GM13976 (cell line): ENCODE measurements at regions of chr12 and their contacts with region 1.

Region 1: GRCh38 chr12:43501703-43502102 is 50.3 kb downstream of the ADAMTS20 start:
- DNase-seq: peak; percentile 38
- CTCF ChIP-seq: peak; percentile 22

Region 2: DNA sequence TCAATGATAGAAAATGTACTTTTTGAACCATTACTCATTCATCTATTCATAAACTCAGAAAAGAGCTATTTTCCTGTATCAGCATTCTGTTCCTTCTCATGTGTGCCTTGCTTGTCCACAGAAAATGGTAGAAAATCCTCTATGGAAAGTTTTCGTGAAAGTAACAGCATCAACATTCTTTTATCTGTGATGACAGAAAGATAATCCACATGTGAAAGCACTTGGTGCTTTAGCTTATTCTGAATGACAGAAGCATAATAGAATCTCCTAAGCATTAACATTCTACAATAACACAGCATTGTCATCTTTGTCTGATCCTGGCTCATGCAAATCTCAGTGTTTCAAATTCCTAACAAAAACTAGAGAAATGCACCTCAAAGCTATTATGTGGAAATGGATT is 381.6 kb before region 1 on chr12:
- in situ Hi-C with region 1: no loop called
- DNase-seq: no peak
- CTCF ChIP-seq: no peak

Region 3: DNA sequence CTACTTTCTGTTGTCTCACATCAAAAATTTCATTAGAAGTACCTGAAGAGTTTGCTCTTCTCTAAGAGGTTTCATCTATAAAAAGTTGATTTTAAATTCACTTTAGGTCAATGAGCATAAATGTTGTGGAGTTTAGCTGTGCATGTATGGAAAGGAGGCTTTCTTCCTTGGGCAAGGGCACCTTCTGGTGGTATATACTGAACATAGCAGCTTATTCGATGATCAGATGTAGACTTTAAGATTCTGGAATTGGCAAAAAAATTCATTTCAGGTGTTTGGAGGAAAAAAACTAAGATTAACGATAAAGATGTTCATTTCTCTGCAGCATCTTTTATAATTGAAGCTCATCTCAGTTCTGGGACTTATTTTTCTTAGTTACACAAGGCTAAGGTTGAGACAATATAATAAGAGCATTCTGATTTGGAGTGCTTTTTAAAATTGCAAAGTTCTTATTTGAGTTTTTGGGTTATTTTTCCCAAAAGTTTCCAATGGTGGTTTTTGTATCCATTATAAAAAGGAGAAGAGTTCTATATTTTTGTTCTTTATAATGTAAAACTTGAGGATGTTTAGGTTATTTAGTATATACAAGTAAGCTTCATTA is 381.0 kb after region 1 on chr12:
- in situ Hi-C with region 1: loop called (anchors 25 kb)
- DNase-seq: peak; percentile 49
- CTCF ChIP-seq: peak; percentile 52